Activated CD4-positive, alpha-beta T cell treated with anti-CD3 and anti-CD28 coated beads for 36 hours (primary cell): ENCODE measurements at regions of chr18 and their contacts with region 1.

Region 1: GRCh38 chr18:11733031-11733430 is 44.0 kb downstream of the GNAL start:
- DNase-seq: peak; percentile 84
- ATAC-seq: peak; percentile 83
- H3K4me3 Mint-ChIP-seq: no peak overlapping the region
- H3K27ac Mint-ChIP-seq: no peak overlapping the region
- H3K4me1 Mint-ChIP-seq: no peaks in the 10 kb centered on the region
- H3K27me3 Mint-ChIP-seq: peaks cover 35% of the 10 kb centered on the region

Region 2: DNA sequence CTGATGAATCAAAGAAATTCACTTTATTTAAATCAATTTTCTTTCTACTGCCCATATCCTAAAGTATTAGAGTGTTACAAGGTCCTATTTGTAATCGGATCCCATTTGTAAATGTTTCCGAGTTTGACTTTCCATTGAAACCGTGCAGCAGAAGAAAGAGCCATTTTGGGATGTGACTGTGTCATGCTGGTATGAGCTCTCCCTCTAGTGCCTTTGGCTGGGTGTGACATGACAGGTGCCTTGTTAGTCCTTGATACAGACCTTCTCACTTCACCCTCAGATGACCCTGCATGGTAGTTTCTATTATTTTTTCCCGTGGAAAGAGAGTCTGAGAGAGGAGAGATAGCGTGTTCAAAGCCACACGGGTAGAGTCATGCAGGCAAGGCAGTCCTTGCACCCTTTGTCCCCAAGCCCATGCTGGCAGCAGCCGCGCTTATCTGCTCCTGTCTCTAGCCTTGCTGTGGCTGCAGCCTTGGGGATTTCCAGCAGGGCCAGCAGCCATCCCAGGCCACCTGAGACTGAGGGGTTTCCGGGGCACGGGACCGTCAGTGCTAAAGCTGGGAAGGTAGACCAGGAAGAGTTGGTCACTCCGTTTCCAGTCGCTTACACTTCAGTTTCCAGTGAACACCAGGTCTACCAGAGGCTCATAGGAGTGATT is 139.6 kb after region 1 on chr18:
- CTCF ChIA-PET with region 1: interaction called, 3 read pairs
- POLR2A ChIA-PET with region 1: no interaction called
- intact Hi-C with region 1: loop called (anchors 2 to 5 kb)
- DNase-seq: peak; percentile 22
- ATAC-seq: peak; percentile 49
- H3K4me3 Mint-ChIP-seq: no peak overlapping the region
- H3K27ac Mint-ChIP-seq: no peak overlapping the region
- H3K4me1 Mint-ChIP-seq: peaks cover 2% of the 10 kb centered on the region
- H3K27me3 Mint-ChIP-seq: peaks cover 6% of the 10 kb centered on the region

Region 3: DNA sequence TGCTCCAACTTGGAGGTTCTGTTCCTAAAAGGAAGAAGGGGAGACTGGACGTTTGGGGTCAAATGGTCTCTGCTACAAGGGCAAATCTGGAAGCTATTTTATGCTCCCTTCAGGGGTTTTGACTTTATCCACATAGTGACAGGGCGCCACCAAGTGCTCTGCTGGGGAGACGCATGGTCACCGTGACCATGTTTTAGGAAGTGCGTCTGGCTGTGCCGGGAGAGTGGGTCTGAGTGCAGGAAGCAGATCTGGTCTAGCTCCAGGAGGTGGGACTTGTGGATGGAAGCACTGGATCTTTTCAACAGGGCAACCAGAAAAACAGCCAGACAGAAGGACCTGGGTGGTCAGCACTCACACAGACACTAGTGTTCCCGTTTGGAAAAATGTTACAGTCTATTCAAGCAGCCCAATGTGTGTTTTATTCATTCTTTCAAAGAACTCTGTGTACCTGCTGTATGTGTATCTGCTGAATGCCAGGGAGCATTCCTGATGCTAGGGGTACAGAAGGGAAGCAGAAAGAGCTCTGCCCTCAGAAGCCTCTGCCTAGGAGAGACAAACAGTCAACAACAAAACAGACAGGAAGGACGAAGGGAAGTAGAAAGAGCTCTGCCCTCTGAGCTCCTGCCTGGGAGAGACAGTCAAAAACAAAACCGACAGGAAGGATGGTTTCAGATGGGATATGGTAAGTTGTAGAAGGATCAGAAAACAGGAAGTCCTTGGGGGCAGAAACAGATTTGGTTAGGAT is 262.6 kb after region 1 on chr18:
- CTCF ChIA-PET with region 1: interaction called, 6 read pairs
- POLR2A ChIA-PET with region 1: no interaction called
- intact Hi-C with region 1: loop called (anchors 1 to 2 kb)
- DNase-seq: peak; percentile 75
- ATAC-seq: peak; percentile 97
- H3K4me3 Mint-ChIP-seq: no peak overlapping the region
- H3K27ac Mint-ChIP-seq: no peak overlapping the region
- H3K4me1 Mint-ChIP-seq: peaks cover 7% of the 10 kb centered on the region
- H3K27me3 Mint-ChIP-seq: no peaks in the 10 kb centered on the region

Region 4: DNA sequence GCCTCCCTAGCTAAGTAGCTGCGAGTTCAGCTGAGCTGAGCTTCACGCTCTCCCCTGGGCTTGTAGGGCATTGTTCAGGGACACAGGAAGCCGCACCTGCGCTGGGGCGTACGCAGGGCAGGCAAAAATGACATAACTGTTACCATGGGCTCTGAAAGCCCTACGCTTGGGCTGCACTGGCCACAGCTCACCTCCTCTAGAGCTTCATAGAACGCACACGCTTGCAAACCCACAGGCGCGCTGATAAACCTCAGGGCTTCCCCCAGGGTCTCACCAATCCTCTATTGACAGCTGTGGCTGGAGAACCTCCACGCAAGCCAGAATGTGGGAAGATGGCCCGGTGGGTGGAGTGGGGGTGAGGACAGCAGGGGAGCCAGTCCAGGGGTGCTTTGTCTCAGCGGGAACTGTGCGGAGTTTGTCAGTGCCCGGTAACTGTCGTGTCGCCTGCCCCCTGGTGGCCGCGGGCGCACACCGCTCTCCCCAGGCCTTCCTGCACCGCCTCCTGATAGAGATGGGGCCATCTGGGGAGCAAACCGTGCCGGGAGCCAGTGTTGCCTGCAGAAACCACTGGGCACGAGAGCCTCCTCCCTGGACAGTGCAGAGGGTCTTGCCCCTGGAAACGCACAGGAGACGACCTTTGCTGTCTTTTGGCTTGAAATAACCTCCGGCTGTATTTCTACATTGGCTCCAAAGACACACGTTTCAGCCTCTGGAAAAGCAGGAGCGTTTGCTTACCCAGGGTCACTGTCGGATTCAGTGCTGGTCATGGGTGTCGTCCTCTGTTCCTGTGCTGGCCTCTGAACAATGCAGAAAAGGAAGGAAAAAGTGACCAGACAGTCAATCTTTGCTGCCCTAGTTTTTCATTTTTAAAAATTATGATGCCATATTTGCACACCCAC is 504.2 kb after region 1 on chr18:
- CTCF ChIA-PET with region 1: no interaction called
- POLR2A ChIA-PET with region 1: no interaction called
- intact Hi-C with region 1: loop called in 1 of 2 experiments (anchors 2 kb)
- DNase-seq: peak; percentile 86
- ATAC-seq: peak; percentile 98
- H3K4me3 Mint-ChIP-seq: no peak overlapping the region
- H3K27ac Mint-ChIP-seq: no peak overlapping the region
- H3K4me1 Mint-ChIP-seq: no peaks in the 10 kb centered on the region
- H3K27me3 Mint-ChIP-seq: peaks cover 36% of the 10 kb centered on the region